ENCODE measurements at regions of chr1 and their contacts with region 1.

Region 1: DNA sequence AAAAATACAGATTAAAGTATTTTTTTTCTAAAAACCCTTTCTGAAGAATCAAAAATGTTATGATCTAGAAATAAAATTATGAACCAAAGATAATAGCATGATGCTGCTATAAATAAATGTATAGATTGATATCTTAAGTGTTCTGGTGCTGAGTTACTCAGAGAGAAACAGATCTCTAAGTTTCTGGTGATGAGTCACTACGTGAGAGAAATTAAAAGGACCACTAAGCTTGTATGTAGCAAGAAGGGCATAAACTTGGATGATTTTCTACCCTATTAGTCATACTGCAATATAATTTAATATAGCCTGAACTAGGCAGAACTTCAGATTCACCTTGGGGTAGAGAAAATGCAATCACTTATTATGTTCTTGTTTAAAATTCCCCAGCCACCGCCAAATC is 514.8 kb downstream of the AMY1C start:
- DNase-seq: peak; percentile 9
- ATAC-seq: no peak
- H3K4me3 ChIP-seq: no peak overlapping the region
- H3K27ac ChIP-seq: no peak overlapping the region
- H3K4me1 ChIP-seq: no peaks in the 10 kb centered on the region
- H3K27me3 ChIP-seq: no peaks in the 10 kb centered on the region
- CTCF ChIP-seq: no peak

Region 2: GRCh38 chr1:103788377-103788776 is 476.1 kb before region 1 on chr1:
- CTCF ChIA-PET with region 1: no interaction called
- POLR2A ChIA-PET with region 1: no interaction called
- intact Hi-C with region 1: loop called (anchors 5 kb)
- DNase-seq: peak; percentile 60
- ATAC-seq: 0 out of 2 replicates have a peak, but pooled peaks have one; percentile 35
- H3K4me3 ChIP-seq: no peak overlapping the region
- H3K27ac ChIP-seq: no peak overlapping the region
- H3K4me1 ChIP-seq: no peaks in the 10 kb centered on the region
- H3K27me3 ChIP-seq: no peaks in the 10 kb centered on the region
- CTCF ChIP-seq: peak; percentile 67

Measured in PC-3 (cell line).